A549 (cell line): ENCODE measurements at regions of chr12 and their contacts with region 1.

Region 1: DNA sequence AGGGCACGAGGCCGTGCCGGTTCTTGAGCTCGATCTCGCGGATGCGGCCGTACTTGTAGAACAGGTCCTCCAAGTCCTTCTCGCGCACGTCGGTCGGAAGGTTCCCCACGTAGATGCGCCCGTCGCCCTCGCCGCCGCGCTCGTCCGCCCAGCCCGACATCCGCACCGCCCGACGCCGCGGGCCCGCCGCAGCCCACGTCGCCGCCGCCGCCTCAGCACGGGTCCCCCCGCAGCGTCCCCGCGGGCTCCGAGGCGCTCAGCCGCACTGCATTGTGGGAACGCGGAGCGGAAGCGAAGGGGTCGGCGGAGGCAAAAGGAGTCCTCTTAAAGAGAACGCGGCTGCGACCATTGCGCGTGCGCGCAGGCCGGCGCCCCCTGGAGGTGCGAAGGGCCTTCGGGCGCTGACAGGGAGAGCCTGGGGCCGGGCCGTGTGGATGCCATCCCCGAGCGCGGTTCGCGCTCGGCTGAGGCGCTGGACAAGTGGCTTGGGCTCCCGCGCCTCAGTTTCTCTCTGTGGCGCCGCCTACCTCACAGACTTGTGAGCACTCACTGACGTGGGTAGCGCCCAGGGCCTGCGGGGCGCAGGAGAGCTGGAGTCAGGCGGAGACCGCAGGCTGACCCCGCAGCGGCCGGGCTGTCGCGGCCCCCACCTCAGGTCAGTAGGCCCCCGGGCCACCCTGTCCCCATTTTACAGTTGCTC is at the start of gene SRSF9:
- DNase-seq: peak; percentile 98
- ATAC-seq: peak; percentile 86 to 92
- H3K4me3 ChIP-seq: peak within 1 kb of the TSS; percentile 80
- H3K27ac ChIP-seq: peak within 1 kb of the TSS; percentile 98
- H3K4me1 ChIP-seq: peaks cover 38% of the 10 kb centered on the region
- CTCF ChIP-seq: peak; percentile 89
- EP300 ChIP-seq: no peak
- POLR2A ChIP-seq: peak; percentile 88
- RAD21 ChIP-seq: peak in 1 of 2 experiments; percentile 32; a peak in 1 of 5 replicates
- polyA plus RNA-seq, gene SRSF9: 173 and 218 TPM in 2 replicates

Region 2: GRCh38 chr12:120367233-120367923 is 102.2 kb before region 1 on chr12:
- CTCF ChIA-PET with region 1: interaction called, 14 read pairs
- POLR2A ChIA-PET with region 1: no interaction called
- DNase-seq: peak in 1 of 2 experiments; percentile 52
- ATAC-seq: peak in 1 of 2 experiments; percentile 47; a peak in 3 of 6 replicates
- H3K4me3 ChIP-seq: no peak overlapping the region
- H3K27ac ChIP-seq: no peak overlapping the region
- H3K4me1 ChIP-seq: peaks cover 14% of the 10 kb centered on the region; the same call in 2 of the 3 replicates
- CTCF ChIP-seq: peak; percentile 39; the same call in 2 of the 3 replicates
- EP300 ChIP-seq: no peak
- POLR2A ChIP-seq: no peak
- RAD21 ChIP-seq: no peak

Region 3: DNA sequence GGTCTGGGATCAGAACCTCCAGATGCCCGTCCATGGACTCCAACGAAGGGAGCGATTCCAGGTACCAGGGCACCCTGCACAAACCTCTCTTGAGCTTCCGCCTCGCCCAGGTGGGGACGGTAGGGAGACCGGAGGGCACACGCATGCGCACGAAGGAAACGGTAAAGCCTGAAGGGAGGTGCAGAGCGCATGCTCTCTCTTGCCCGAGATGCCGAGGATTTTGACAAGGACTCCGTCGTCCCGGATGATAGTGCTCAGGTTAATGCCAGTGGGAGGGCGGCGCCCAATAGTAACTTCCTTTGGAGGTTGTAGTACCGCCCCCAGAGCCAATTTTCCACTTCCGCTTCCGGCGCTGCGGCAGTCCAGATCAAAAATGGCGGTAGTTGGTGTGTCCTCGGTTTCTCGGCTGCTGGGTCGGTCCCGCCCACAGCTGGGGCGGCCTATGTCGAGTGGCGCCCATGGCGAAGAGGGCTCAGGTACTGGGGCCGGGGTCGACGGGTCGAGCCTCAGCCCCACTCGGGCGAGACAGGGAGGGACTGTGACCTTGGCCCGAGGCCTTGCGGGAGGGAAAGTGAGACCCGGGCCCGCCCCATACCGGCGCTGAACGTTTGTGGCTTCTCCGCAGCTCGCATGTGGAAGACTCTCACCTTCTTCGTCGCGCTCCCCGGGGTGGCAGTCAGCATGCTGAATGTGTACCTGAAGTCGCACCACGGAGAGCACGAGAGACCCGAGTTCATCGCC is 31.7 kb before region 1 on chr12 and contains the start of gene COX6A1:
- CTCF ChIA-PET with region 1: interaction called, 99 read pairs
- POLR2A ChIA-PET with region 1: no interaction called
- DNase-seq: peak; percentile 99
- ATAC-seq: peak; percentile 97 to 98
- H3K4me3 ChIP-seq: peak within 1 kb of the TSS; percentile 79
- H3K27ac ChIP-seq: peak within 1 kb of the TSS; percentile 71 to 91
- H3K4me1 ChIP-seq: peaks cover 14% of the 10 kb centered on the region
- CTCF ChIP-seq: no peak
- EP300 ChIP-seq: no peak
- POLR2A ChIP-seq: peak; percentile 77
- RAD21 ChIP-seq: no peak
- polyA plus RNA-seq, gene COX6A1: 948 and 1,287 TPM in 2 replicates

Region 4: GRCh38 chr12:120445911-120446843 is 23.4 kb before region 1 on chr12 and contains the starts of genes GATC and TRIAP1:
- CTCF ChIA-PET with region 1: interaction called, 167 read pairs
- POLR2A ChIA-PET with region 1: no interaction called
- DNase-seq: peak; percentile 72 to 89
- ATAC-seq: peak; percentile 92 to 96
- H3K4me3 ChIP-seq: peak within 1 kb of the TSS; percentile 84
- H3K27ac ChIP-seq: peak within 1 kb of the TSS; percentile 93 to 97
- H3K4me1 ChIP-seq: peaks cover 17% of the 10 kb centered on the region
- CTCF ChIP-seq: no peak
- EP300 ChIP-seq: no peak
- POLR2A ChIP-seq: peak; percentile 93
- RAD21 ChIP-seq: no peak
- polyA plus RNA-seq, gene GATC: 39.9 and 40.6 TPM in 2 replicates
- polyA plus RNA-seq, gene TRIAP1: 97.9 and 114 TPM in 2 replicates

Region 5: DNA sequence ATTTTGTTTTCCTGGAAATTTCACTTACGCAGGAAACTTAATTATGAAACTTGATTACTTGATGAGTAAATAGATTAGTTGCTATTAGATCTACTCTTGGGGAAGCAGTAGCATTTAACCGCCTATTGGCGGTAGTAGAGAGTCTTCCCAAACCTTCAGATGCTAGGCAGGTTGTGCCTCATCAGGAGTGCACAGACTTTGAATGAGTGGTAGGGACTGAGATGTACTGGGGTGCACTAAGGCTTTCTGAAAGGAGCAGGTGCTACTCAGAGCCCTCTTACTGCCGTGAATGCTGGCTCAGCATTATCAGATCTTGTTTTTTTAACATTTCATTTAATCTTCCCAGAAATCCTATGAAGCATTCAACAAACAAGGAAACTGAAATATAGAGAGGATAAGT is 15.6 kb before region 1 on chr12:
- CTCF ChIA-PET with region 1: interaction called, 167 read pairs
- POLR2A ChIA-PET with region 1: no interaction called
- DNase-seq: peak; percentile 42 to 61
- ATAC-seq: peak; percentile 66 to 78; a peak in 5 of 6 replicates
- H3K4me3 ChIP-seq: no peak overlapping the region
- H3K27ac ChIP-seq: no peak overlapping the region
- H3K4me1 ChIP-seq: no peaks in the 10 kb centered on the region
- CTCF ChIP-seq: peak; percentile 48
- EP300 ChIP-seq: no peak
- POLR2A ChIP-seq: no peak
- RAD21 ChIP-seq: 0 out of 5 replicates have a peak, but pooled peaks of 1 of the 2 experiments have one; percentile 26

Region 6: DNA sequence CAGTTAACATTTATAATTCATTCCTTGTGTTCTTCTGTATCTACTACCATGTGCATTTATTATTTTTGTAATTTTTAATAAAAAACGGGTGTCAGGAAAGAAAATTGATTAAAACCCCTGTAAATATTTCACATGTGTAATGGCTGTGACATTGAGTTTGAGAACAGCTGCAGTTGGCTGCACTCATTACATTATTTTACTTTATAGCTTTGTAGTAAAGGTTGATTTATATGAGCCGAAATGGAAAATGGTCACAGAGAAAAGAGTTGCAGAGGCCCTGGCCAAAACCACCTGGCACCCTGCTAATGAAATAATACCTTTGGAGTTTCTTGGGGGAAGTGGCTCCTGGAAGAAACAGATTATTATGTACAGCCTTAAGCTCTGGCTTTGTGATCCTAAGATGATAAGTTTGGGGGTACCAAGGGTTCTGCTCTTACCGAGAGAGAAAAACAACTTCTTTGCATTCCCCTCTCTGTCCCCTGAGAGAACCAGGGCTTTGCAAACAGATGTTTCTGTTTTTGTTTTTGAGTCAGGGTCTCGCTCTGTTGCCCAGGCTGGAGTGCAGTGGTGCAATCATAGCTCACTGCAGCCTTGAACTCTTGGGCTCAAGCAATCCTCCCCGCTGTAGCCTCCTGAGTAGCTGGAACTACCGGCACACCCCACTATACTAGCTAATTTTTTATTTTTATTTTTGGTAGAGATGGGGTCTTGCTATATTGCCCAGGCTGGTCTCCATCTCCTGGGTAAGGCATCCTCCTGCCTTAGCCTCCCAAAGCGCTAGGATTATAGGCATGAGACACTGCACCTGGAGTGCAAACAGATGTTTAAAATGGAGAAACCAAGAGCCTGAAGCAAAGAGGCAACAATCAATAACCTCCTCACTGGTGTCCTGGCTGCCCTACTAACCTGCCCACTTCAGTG is 16.6 kb after region 1 on chr12:
- CTCF ChIA-PET with region 1: interaction called, 10 read pairs
- POLR2A ChIA-PET with region 1: no interaction called
- DNase-seq: no peak
- ATAC-seq: no peak
- H3K4me3 ChIP-seq: no peak overlapping the region
- H3K27ac ChIP-seq: no peak overlapping the region
- H3K4me1 ChIP-seq: peaks cover 4% of the 10 kb centered on the region; the same call in 1 of the 3 replicates
- CTCF ChIP-seq: no peak
- EP300 ChIP-seq: no peak
- POLR2A ChIP-seq: no peak
- RAD21 ChIP-seq: no peak

Region 7: DNA sequence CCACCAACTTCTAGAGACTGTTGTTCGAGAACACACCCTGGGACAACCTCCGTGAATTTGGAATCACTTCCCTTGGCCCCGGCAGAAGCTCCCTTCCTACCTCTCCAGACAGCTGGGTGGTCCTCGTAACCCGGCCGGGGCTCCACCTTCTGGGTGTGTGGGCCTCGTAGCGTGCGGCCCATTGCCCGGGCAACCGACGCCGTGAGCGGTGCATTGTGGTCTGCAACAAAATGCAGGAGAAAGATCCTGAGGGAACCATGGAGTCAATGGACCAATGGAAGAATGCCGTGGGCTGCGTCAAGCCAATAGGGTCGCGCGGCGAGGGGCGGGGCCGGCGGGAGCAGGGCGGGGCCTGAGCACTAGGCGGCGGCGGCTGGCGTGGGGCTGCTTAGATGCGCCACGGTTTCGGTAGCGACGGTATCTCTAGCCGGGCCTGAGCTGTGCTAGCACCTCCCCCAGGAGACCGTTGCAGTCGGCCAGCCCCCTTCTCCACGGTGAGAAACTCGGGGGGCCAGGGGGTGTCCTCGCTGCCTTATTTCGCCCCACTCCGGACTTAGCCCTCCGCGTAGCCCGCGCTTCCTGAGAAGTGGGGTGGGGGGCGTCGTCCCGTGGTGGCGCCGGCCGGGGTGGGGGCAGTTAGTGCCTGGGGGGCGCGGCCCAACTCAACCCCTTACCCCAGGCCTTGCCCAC is 26.3 kb after region 1 on chr12 and contains the start of gene DYNLL1:
- CTCF ChIA-PET with region 1: interaction called, 12 read pairs
- POLR2A ChIA-PET with region 1: interaction called, 3 read pairs
- DNase-seq: peak; percentile 98 to 99
- ATAC-seq: peak; percentile 96 to 97
- H3K4me3 ChIP-seq: peak within 1 kb of the TSS; percentile 100
- H3K27ac ChIP-seq: peak within 1 kb of the TSS; percentile 96 to 98
- H3K4me1 ChIP-seq: peaks cover 20% of the 10 kb centered on the region
- CTCF ChIP-seq: no peak
- EP300 ChIP-seq: no peak
- POLR2A ChIP-seq: peak; percentile 99
- RAD21 ChIP-seq: no peak
- polyA plus RNA-seq, gene DYNLL1: 744 and 825 TPM in 2 replicates

Region 8: GRCh38 chr12:120767485-120767944 is 297.9 kb after region 1 on chr12:
- CTCF ChIA-PET with region 1: no interaction called
- POLR2A ChIA-PET with region 1: no interaction called
- DNase-seq: no peak
- ATAC-seq: no peak
- H3K4me3 ChIP-seq: no peak overlapping the region
- H3K27ac ChIP-seq: no peak overlapping the region
- H3K4me1 ChIP-seq: no peaks in the 10 kb centered on the region
- CTCF ChIP-seq: no peak
- EP300 ChIP-seq: no peak
- POLR2A ChIP-seq: no peak
- RAD21 ChIP-seq: no peak